ENCODE measurements at regions of chr17 and their contacts with region 1.

Region 1: GRCh38 chr17:12047681-12048376 is 27.2 kb downstream of the MAP2K4 start:
- DNase-seq: no peak
- ATAC-seq: no peak

Region 2: GRCh38 chr17:11535231-11535630 is 512.6 kb before region 1 on chr17:
- intact Hi-C with region 1: loop called (anchors 5 kb)
- DNase-seq: no peak
- ATAC-seq: no peak

Region 3: DNA sequence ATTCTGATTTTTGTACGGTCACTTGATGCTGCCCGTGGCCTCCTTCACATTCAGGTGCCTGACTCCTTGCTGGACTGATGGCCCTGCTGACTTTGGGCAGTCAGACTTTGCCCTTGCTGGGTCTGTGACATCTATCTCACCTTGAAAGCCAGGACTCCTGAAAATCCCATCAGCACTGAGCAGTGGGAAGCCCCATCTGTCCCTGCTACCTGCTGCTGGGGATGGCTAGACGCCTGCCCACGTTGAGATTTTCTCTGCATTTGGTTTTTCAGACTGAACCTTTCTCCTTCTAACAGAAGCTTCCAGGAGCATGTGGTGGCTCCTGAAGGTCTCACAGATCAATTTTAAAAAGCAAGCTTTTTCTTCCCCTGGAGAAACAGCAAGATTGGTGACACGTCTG is 40.4 kb before region 1 on chr17:
- intact Hi-C with region 1: no loop called
- DNase-seq: no peak
- ATAC-seq: no peak